ENCODE measurements at regions of chr11 and their contacts with region 1.

Region 1: DNA sequence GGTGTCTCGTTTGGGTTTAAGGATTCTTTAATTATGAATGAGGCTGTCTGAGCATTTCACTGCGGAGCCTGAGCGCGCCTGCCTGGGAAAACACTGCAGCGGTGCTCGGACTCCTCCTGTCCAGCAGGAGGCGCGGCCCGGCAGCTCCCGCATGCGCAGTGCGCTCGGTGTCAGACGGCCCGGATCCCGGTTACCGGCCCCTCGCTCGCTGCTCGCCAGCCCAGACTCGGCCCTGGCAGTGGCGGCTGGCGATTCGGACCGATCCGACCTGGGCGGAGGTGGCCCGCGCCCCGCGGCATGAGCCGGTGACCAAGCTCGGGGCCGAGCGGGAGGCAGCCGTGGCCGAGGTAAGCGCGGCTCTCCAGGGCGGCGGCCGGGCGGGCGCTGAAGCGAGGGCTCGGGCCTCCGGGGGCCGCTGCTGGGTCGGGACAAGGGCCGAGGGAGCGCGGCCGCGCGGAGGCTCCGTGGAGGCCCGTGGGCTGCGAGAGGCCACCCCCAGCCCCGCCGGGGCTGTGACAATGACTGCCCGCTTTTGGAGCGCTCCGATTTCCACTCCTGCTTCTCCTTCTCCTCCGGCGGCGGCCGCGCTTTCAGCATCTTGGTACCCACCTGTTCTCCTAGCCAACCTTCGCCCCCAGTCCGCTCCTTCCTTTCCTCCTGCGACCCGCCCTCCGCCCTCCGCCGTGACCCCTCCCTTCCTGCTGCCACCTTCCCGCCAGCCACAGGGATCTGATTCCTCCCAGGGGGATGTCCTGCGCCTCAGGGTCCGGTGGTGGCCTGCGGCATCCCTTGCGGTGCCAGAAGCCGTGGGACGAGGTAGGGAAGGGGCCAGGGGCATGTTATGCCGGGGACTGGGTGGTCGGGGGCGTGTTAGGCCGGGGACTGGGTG is at the start of gene EXT2:
- DNase-seq: peak; percentile 82
- H3K4me3 Mint-ChIP-seq: peak within 1 kb of the TSS; percentile 87
- H3K27ac Mint-ChIP-seq: peak within 1 kb of the TSS; percentile 50
- H3K4me1 Mint-ChIP-seq: peaks cover 30% of the 10 kb centered on the region
- H3K27me3 Mint-ChIP-seq: no peaks in the 10 kb centered on the region
- total RNA-seq, gene EXT2: 31.0 and 35.6 TPM in 2 replicates

Region 2: DNA sequence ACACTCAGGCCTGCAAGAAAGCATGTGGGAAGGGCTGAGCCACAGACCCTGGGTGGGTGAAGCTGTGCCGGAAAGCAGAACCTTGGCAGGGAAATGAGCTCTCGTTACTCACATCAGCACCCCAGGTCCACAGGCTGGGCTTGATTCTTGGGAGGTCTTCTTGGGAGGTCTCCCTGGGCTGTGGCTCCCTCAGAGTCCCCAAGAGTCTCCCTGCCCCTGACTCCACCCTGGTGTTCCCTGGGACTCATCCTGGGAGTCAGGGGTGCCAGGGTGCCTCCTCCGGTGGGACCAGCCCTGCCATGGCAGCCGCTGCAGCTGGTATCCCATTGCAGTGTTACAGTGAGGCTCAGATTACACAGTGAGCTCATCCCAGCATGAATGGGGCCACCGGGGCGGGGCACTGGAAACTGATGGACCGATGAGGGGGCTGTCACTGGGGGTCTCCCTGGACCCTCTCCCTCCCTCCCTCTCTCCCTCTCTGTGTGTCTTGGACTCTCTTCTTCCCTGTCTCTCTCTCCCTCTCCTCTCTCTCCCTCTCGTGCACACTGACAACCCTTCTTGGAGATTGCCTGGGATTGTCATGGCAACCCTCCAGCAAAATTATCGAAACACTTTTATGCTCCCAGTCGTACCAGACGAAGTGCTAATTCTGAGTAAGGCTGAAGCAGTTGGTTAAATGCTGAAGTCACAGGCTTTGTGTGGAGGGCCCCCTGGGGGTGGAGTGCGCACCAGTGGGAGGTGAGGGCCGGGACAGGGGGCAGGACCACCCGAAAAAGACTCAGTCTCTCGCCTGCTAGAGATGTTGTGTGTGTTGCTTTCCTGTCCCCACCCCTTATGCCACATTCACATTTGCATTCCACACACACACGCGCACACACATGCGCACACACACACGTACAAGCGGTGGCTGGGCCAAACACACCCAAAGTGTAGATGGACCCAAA is 161.9 kb before region 1 on chr11:
- intact Hi-C with region 1: no loop called
- DNase-seq: no peak
- H3K4me3 Mint-ChIP-seq: no peak overlapping the region
- H3K27ac Mint-ChIP-seq: no peak overlapping the region
- H3K4me1 Mint-ChIP-seq: peaks cover 6% of the 10 kb centered on the region
- H3K27me3 Mint-ChIP-seq: peaks cover 16% of the 10 kb centered on the region

Region 3: GRCh38 chr11:43944761-43945311 is 150.9 kb before region 1 on chr11:
- intact Hi-C with region 1: loop called (anchors 2 kb)
- DNase-seq: peak; percentile 56
- H3K4me3 Mint-ChIP-seq: peak overlapping the region; percentile 86
- H3K27ac Mint-ChIP-seq: peak overlapping the region; percentile 40
- H3K4me1 Mint-ChIP-seq: peaks cover 24% of the 10 kb centered on the region
- H3K27me3 Mint-ChIP-seq: peaks cover 62% of the 10 kb centered on the region

Region 4: DNA sequence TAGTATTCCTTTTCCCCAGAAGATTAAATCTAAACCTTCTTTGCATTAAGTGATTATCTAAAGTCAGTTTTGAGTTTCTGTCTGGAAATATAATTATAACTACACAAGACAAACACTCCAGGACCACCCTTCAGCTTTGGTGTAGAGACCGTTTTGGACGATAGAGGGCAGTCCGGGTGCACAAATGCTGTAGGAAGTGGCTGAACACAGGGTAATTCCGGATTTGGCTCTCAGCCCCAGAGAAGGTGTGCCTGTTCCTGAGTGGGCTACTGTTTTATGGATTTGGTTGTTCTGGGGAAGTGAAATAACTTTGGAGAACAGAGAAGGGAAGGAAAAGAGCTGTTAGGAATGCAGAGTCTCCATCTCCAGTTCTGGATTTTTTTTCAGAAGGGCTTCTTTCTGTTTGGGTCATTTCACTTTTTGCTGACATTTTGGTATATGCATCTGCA is 14.5 kb after region 1 on chr11:
- intact Hi-C with region 1: loop called (anchors 1 kb)
- DNase-seq: peak; percentile 45
- H3K4me3 Mint-ChIP-seq: no peak overlapping the region
- H3K27ac Mint-ChIP-seq: no peak overlapping the region
- H3K4me1 Mint-ChIP-seq: peaks cover 19% of the 10 kb centered on the region
- H3K27me3 Mint-ChIP-seq: no peaks in the 10 kb centered on the region

Region 5: GRCh38 chr11:44203270-44204043 is 107.7 kb after region 1 on chr11:
- intact Hi-C with region 1: no loop called
- DNase-seq: no peak
- H3K4me3 Mint-ChIP-seq: no peak overlapping the region
- H3K27ac Mint-ChIP-seq: no peak overlapping the region
- H3K4me1 Mint-ChIP-seq: no peaks in the 10 kb centered on the region
- H3K27me3 Mint-ChIP-seq: no peaks in the 10 kb centered on the region

Region 6: DNA sequence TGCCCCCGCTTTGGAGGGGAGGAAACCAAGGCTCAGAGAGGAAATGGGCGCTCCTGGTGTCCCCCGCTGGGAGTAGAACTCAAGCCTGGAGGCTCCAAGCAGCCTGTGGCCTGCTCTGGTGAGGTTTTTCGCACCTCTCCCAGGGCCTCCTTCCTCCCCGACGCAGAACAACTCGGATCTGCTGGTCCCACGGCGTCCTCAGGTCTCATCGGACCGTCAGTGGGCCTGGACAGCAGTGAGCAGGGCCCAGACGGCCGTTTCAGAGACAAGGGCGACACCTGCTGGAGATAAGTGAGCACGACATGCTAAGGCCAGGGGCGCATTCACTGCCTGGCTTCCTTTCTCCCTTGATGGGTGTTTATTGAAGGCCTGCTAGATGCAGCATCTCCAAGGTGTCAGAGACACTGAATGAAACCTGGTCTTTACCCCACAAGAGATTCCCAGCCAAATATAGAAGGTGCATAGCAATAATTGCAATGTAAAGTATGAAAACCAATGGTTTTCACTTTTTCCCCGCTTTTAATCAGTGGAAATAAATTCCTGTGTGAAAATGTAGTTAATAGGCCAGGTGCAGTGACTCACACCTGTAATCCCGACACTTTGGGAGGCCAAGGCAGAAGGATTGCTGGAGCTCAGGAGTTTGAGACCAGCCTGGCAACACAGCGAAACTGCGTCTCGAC is 442.8 kb after region 1 on chr11:
- intact Hi-C with region 1: loop called (anchors 1 kb)
- DNase-seq: peak; percentile 65
- H3K4me3 Mint-ChIP-seq: no peak overlapping the region
- H3K27ac Mint-ChIP-seq: no peak overlapping the region
- H3K4me1 Mint-ChIP-seq: no peaks in the 10 kb centered on the region
- H3K27me3 Mint-ChIP-seq: peaks cover 3% of the 10 kb centered on the region

Measured in activated T-helper 1 cell treated with anti-CD3 and anti-CD28 coated beads, Interleukin-12 subunit alpha, Interleukin-12 subunit beta, Interleukin-2, Interleukin-4 antibody, amounts not matched to agents 30 ng/mL and 10 ng/mL and 1 ng/mL, durations not matched to agents 14 hours and 24 hours and 36 hours (primary cell).